K562 (cell line): ENCODE measurements at regions of chr1 and their contacts with region 1.

Region 1: GRCh38 chr1:91021686-91022517 is at the start of gene ZNF644:
- DNase-seq: peak; percentile 90 to 94 (median 92)
- ATAC-seq: peak; percentile 86
- H3K4me3 ChIP-seq: peak within 1 kb of the TSS; percentile 83
- H3K27ac ChIP-seq: peak within 1 kb of the TSS; percentile 100
- H3K4me1 ChIP-seq: peaks cover 13 to 15% of the 10 kb centered on the region in 2 experiments; a peak in 4 of 5 replicates
- H3K27me3 ChIP-seq: no peaks in the 10 kb centered on the region
- CTCF ChIP-seq: peak in 1 of 3 experiments; percentile 7; a peak in 1 of 6 replicates
- EP300 ChIP-seq: peak; percentile 10; the same call in 1 of the 2 replicates
- POLR2A ChIP-seq: peak; percentile 92
- RAD21 ChIP-seq: no peak
- polyA plus RNA-seq, gene ZNF644: 39.8 to 48.4 TPM

Region 2: GRCh38 chr1:90809996-90810395 is 211.9 kb before region 1 on chr1:
- CTCF ChIA-PET with region 1: no interaction called
- POLR2A ChIA-PET with region 1: no interaction called
- in situ Hi-C with region 1: no loop called
- intact Hi-C with region 1: loop called (anchors 10 kb)
- DNase-seq: no peak
- ATAC-seq: no peak
- H3K4me3 ChIP-seq: no peak overlapping the region
- H3K27ac ChIP-seq: no peak overlapping the region
- H3K4me1 ChIP-seq: peaks cover 13 to 27% of the 10 kb centered on the region in 2 experiments; a peak in 4 of 5 replicates
- H3K27me3 ChIP-seq: no peaks in the 10 kb centered on the region
- CTCF ChIP-seq: no peak
- EP300 ChIP-seq: no peak
- POLR2A ChIP-seq: no peak
- RAD21 ChIP-seq: no peak

Region 3: DNA sequence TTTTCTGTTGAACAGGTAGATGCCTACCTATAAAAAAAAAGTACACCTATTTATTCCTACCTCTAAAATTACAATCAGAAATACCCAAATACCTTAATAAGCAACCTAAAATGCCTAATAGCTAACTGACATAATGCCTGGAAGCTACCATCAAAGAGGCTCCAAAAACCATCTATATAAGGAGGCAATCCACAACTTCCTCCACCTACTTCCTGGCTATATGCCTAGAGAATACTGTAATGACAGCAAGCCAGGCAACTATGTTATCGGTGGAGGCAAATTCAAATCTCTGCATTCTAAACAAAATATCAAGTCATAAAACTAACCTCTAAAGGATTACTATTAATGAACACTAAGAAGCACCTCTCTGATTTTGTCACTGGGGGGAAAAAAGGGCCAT is 10.2 kb before region 1 on chr1:
- CTCF ChIA-PET with region 1: no interaction called
- POLR2A ChIA-PET with region 1: interaction called, 40 read pairs
- in situ Hi-C with region 1: no loop called
- intact Hi-C with region 1: no loop called
- DNase-seq: no peak
- ATAC-seq: no peak
- H3K4me3 ChIP-seq: no peak overlapping the region
- H3K27ac ChIP-seq: no peak overlapping the region
- H3K4me1 ChIP-seq: no peaks in the 10 kb centered on the region
- H3K27me3 ChIP-seq: no peaks in the 10 kb centered on the region
- CTCF ChIP-seq: no peak
- EP300 ChIP-seq: no peak
- POLR2A ChIP-seq: no peak
- RAD21 ChIP-seq: no peak

Region 4: GRCh38 chr1:91099746-91100621 is 78.1 kb after region 1 on chr1:
- CTCF ChIA-PET with region 1: no interaction called
- POLR2A ChIA-PET with region 1: no interaction called
- in situ Hi-C with region 1: no loop called
- intact Hi-C with region 1: no loop called
- DNase-seq: peak in 1 of 4 experiments; percentile 3
- ATAC-seq: no peak
- H3K4me3 ChIP-seq: no peak overlapping the region
- H3K27ac ChIP-seq: no peak overlapping the region
- H3K4me1 ChIP-seq: no peaks in the 10 kb centered on the region; a peak in 1 of 5 replicates
- H3K27me3 ChIP-seq: peaks cover 0 to 7% of the 10 kb centered on the region in 2 experiments; a peak in 3 of 5 replicates
- CTCF ChIP-seq: no peak
- EP300 ChIP-seq: no peak
- POLR2A ChIP-seq: no peak
- RAD21 ChIP-seq: no peak

Region 5: GRCh38 chr1:91511386-91511785 is 489.5 kb after region 1 on chr1:
- CTCF ChIA-PET with region 1: no interaction called
- POLR2A ChIA-PET with region 1: no interaction called
- in situ Hi-C with region 1: no loop called
- intact Hi-C with region 1: no loop called
- DNase-seq: peak; percentile 15 to 52 (median 32)
- ATAC-seq: peak; percentile 72
- H3K4me3 ChIP-seq: no peak overlapping the region
- H3K27ac ChIP-seq: no peak overlapping the region
- H3K4me1 ChIP-seq: no peaks in the 10 kb centered on the region
- H3K27me3 ChIP-seq: no peaks in the 10 kb centered on the region
- CTCF ChIP-seq: peak; percentile 28 to 69 (median 45); a peak in 4 of 6 replicates
- EP300 ChIP-seq: no peak
- POLR2A ChIP-seq: no peak
- RAD21 ChIP-seq: peak; percentile 70 to 74